ENCODE measurements at regions of chr5 and their contacts with region 1.

Region 1: GRCh38 chr5:126624534-126624933 is 23.8 kb downstream of the PHAX start:
- DNase-seq: peak; percentile 94
- ATAC-seq: peak; percentile 82
- H3K4me3 ChIP-seq: no peak overlapping the region
- H3K27ac ChIP-seq: peak overlapping the region; percentile 66; the same call in 1 of the 2 replicates
- H3K4me1 ChIP-seq: peaks cover 4% of the 10 kb centered on the region
- H3K27me3 ChIP-seq: no peaks in the 10 kb centered on the region
- CTCF ChIP-seq: no peak
- POLR2A ChIP-seq: no peak
- RAD21 ChIP-seq: no peak

Region 2: DNA sequence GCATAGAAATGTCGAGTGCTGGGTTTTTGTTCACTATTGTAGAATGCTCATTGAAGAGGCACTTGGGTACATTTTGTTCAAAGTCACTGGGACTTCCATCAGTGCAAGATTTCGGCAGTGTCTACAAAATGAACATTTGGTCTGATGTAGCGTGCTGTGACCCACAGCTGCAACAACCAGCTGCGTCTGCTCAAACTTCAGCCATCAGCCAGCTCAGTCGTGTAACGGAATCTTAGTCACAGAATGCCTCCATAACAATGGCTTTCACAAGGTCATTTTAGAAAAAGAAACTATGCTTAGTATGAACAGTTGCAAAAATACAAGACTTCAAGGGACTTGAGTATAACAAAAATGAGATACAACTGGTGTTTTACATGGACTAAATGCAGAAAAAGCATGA is 1029.4 kb before region 1 on chr5:
- CTCF ChIA-PET with region 1: no interaction called
- POLR2A ChIA-PET with region 1: no interaction called
- dilution Hi-C with region 1: no loop called
- in situ Hi-C with region 1: no loop called
- intact Hi-C with region 1: no loop called
- DNase-seq: peak; percentile 82
- ATAC-seq: peak; percentile 40
- H3K4me3 ChIP-seq: no peak overlapping the region
- H3K27ac ChIP-seq: no peak overlapping the region
- H3K4me1 ChIP-seq: no peaks in the 10 kb centered on the region; the same call in 1 of the 2 replicates
- H3K27me3 ChIP-seq: no peaks in the 10 kb centered on the region
- CTCF ChIP-seq: no peak
- POLR2A ChIP-seq: no peak
- RAD21 ChIP-seq: no peak

Region 3: GRCh38 chr5:126516133-126516532 is 108.4 kb before region 1 on chr5:
- CTCF ChIA-PET with region 1: no interaction called
- POLR2A ChIA-PET with region 1: no interaction called
- dilution Hi-C with region 1: no loop called
- in situ Hi-C with region 1: no loop called
- intact Hi-C with region 1: no loop called
- DNase-seq: peak; percentile 92
- ATAC-seq: peak; percentile 50
- H3K4me3 ChIP-seq: no peak overlapping the region
- H3K27ac ChIP-seq: no peak overlapping the region
- H3K4me1 ChIP-seq: peaks cover 10% of the 10 kb centered on the region
- H3K27me3 ChIP-seq: no peaks in the 10 kb centered on the region
- CTCF ChIP-seq: no peak
- POLR2A ChIP-seq: no peak
- RAD21 ChIP-seq: no peak

Region 4: GRCh38 chr5:126707080-126707479 is 82.5 kb after region 1 on chr5:
- CTCF ChIA-PET with region 1: no interaction called
- POLR2A ChIA-PET with region 1: interaction called, 10 read pairs
- dilution Hi-C with region 1: no loop called
- in situ Hi-C with region 1: no loop called
- intact Hi-C with region 1: no loop called
- DNase-seq: no peak
- ATAC-seq: no peak
- H3K4me3 ChIP-seq: no peak overlapping the region
- H3K27ac ChIP-seq: no peak overlapping the region
- H3K4me1 ChIP-seq: no peaks in the 10 kb centered on the region
- H3K27me3 ChIP-seq: no peaks in the 10 kb centered on the region
- CTCF ChIP-seq: no peak
- POLR2A ChIP-seq: no peak
- RAD21 ChIP-seq: no peak

Region 5: GRCh38 chr5:127186657-127187056 is 562.1 kb after region 1 on chr5:
- CTCF ChIA-PET with region 1: no interaction called
- POLR2A ChIA-PET with region 1: no interaction called
- dilution Hi-C with region 1: no loop called
- in situ Hi-C with region 1: no loop called
- intact Hi-C with region 1: no loop called
- DNase-seq: no peak
- ATAC-seq: no peak
- H3K4me3 ChIP-seq: no peak overlapping the region
- H3K27ac ChIP-seq: no peak overlapping the region
- H3K4me1 ChIP-seq: no peaks in the 10 kb centered on the region
- H3K27me3 ChIP-seq: peaks cover 10% of the 10 kb centered on the region
- CTCF ChIP-seq: no peak
- POLR2A ChIP-seq: no peak
- RAD21 ChIP-seq: no peak